Ascending aorta (tissue), 2 donors: ENCODE measurements at regions of chr17 and their contacts with region 1.

Region 1: DNA sequence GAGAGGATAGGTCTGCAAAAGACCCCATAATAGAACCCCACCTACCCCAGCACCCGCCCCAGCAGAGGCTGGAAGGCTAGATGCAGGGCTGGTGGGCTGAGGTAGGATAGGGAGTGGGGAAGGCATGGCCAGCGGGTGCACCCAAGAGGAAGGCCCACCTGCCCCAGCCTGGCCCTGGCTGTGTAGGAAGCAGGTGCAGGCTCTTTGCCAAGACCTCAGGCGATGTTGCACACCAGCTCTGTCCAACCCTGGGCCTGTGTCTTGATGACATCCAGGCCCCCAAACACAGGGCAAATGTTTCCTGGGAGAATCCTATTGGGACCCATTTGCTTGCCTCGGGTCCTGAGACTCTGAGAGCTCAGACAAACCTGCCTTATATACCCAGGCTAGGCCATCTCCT is 12.2 kb downstream of the UNC119 start:
- DNase-seq: no peak
- H3K4me3 ChIP-seq: no peak overlapping the region
- H3K27ac ChIP-seq: no peak overlapping the region
- H3K4me1 ChIP-seq: no peaks in the 10 kb centered on the region
- H3K27me3 ChIP-seq: no peaks in the 10 kb centered on the region
- CTCF ChIP-seq: no peak

Region 2: GRCh38 chr17:28494445-28495188 is 45.6 kb before region 1 on chr17:
- intact Hi-C with region 1: loop called (anchors 1 kb)
- DNase-seq: peak in 1 of 2 donors; percentile 75
- H3K4me3 ChIP-seq: no peak overlapping the region
- H3K27ac ChIP-seq: no peak overlapping the region
- H3K4me1 ChIP-seq: no peaks in the 10 kb centered on the region
- H3K27me3 ChIP-seq: no peaks in the 10 kb centered on the region
- CTCF ChIP-seq: peak; percentile 64 to 91 (median 69)